SK-N-SH (cell line): ENCODE measurements at regions of chr2 and their contacts with region 1.

Region 1: DNA sequence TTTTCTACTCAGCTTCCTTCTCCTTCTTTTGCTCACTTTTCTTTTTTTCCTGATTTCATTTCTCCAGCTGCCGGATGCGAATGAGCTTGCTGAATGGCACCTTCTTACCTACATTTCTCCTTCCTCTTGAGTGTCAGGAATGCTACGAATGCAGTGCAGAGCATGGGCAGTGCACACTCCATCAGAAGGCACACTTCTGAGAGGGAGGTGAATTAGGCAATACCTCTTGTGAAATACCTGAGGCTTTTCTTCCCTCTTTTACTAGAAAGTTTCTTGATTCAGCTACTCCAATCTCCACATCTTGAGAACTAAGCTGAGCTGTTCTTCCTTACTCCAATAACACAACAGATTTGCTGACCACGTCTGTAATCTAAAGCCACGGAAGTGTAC is 51.1 kb downstream of the PLEKHM3 start:
- DNase-seq: no peak
- H3K4me3 ChIP-seq: no peak overlapping the region
- H3K27ac ChIP-seq: no peak overlapping the region
- H3K4me1 ChIP-seq: peaks cover 0 to 4% of the 10 kb centered on the region in 2 experiments; a peak in 2 of 4 replicates
- H3K27me3 ChIP-seq: no peaks in the 10 kb centered on the region
- CTCF ChIP-seq: no peak
- EP300 ChIP-seq: no peak
- RAD21 ChIP-seq: no peak

Region 2: DNA sequence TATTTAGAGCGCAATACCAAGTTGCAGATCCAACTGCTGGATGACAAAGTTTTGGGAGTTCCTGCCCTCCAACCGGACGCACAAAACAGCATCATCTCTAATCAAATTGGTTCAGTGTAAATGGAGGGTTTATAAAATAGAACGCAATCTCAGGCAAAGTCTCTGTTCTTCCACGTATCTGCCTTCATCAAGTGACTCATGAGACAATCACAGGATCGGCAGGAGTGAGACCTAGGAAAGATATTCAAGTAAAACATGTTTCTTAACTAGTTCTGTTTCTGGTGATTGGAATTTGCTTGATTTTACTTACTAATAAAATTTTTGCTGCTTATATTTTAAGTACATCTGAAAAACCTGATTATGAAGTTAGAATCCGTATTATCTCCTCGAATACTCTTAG is 212.1 kb before region 1 on chr2:
- CTCF ChIA-PET with region 1: interaction called, 36 read pairs
- POLR2A ChIA-PET with region 1: no interaction called
- DNase-seq: no peak
- H3K4me3 ChIP-seq: no peak overlapping the region
- H3K27ac ChIP-seq: no peak overlapping the region; a peak in 1 of 4 replicates
- H3K4me1 ChIP-seq: peaks cover 6 to 10% of the 10 kb centered on the region in 2 experiments; a peak in 2 of 4 replicates
- H3K27me3 ChIP-seq: no peaks in the 10 kb centered on the region
- CTCF ChIP-seq: no peak
- EP300 ChIP-seq: no peak
- RAD21 ChIP-seq: no peak

Region 3: DNA sequence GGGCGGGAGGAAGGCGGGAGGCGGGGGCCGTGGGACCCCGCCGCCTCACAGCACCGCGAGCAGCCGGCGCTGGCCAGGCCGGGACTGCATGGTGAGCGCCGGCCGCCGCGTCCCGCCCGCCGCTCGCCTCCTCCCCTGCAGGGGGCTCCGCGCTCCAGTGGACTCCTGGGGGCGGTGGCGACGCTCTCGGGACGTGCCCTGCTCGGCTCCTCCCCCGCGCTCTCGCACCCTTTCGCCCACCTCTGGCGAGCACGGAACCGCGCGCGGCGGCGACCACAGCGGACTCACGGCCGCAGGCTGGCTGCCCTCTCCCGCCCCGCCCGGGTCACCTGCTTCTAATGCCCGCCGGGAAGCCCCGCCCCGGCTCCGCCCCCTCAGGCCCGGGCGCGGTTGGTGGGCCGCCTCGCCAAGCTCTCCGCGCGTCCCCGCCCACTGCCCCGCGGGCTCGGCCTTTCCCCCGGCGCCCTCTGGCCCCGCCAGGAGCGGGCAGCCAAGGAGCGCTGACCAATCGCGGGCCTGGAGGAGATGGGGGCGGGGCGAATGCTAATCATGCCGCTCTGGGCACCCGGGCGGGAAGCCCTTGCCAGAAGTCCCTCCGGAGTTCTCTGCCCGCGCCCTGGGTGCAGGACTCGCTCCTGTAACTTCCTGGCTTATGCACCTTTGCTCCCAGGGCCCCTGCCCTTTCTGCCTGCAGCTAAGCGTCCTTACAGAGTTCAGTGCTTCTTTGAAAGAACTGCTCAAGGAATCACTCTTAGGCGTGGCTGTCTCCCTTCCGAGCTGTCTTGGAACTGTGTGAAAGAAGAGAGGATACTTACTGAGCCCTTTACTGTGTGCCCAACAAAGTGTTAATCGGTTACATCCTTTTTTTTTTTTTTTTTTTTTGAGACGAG is 204.4 kb before region 1 on chr2 and contains the start of gene FZD5:
- CTCF ChIA-PET with region 1: interaction called, 36 read pairs
- POLR2A ChIA-PET with region 1: no interaction called
- DNase-seq: peak; percentile 98
- H3K4me3 ChIP-seq: peak within 1 kb of the TSS; percentile 79 to 89
- H3K27ac ChIP-seq: peak within 1 kb of the TSS; percentile 11 to 33; a peak in 2 of 4 replicates
- H3K4me1 ChIP-seq: peaks cover 0 to 18% of the 10 kb centered on the region in 2 experiments; a peak in 1 of 4 replicates
- H3K27me3 ChIP-seq: no peaks in the 10 kb centered on the region
- CTCF ChIP-seq: peak; percentile 49
- EP300 ChIP-seq: no peak
- RAD21 ChIP-seq: peak; percentile 42
- polyA plus RNA-seq, gene FZD5: 0.52 and 0.72 TPM in 2 replicates

Region 4: GRCh38 chr2:207847807-207848544 is 126.2 kb before region 1 on chr2:
- CTCF ChIA-PET with region 1: no interaction called
- POLR2A ChIA-PET with region 1: no interaction called
- DNase-seq: no peak
- H3K4me3 ChIP-seq: no peak overlapping the region
- H3K27ac ChIP-seq: no peak overlapping the region
- H3K4me1 ChIP-seq: no peaks in the 10 kb centered on the region
- H3K27me3 ChIP-seq: no peaks in the 10 kb centered on the region
- CTCF ChIP-seq: no peak
- EP300 ChIP-seq: no peak
- RAD21 ChIP-seq: no peak

Region 5: DNA sequence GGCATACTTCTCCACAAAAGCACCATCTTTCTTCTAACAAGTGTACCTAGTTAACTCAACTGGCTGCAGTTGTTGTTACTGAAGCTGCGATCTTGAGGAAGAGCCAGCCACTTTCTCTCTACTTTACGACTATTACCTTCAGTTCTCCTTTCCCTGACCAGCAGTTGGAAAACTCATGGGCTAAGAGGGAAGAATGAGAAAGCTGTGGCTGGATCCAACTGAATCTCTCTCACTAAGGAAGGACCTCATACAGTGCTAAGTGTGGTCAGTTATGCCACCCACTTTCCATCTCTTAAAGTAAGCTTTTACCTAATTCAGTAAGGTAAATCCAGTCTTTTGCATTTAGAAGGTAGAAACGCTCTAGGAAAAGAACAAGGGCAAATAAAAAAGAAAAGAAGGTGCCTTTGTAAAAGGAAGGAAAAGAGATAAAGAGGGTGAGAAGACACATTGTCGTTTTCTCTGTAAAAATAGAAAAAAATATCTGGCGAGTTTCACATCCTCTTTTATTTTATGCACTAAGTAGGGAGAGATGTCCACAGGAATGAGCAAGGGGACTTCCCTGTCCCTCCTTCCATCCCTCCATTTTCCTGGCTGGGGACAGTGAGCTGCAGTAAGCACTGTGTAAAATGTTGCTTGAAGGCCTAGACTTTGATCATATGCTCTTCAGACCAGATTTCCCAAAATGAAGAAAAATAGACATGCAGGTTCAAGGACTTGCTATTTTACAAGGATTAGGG is 22.3 kb before region 1 on chr2:
- CTCF ChIA-PET with region 1: interaction called, 14 read pairs
- POLR2A ChIA-PET with region 1: no interaction called
- DNase-seq: no peak
- H3K4me3 ChIP-seq: no peak overlapping the region
- H3K27ac ChIP-seq: no peak overlapping the region
- H3K4me1 ChIP-seq: peaks cover 0 to 5% of the 10 kb centered on the region in 2 experiments; a peak in 1 of 4 replicates
- H3K27me3 ChIP-seq: no peaks in the 10 kb centered on the region
- CTCF ChIP-seq: no peak
- EP300 ChIP-seq: no peak
- RAD21 ChIP-seq: no peak

Region 6: DNA sequence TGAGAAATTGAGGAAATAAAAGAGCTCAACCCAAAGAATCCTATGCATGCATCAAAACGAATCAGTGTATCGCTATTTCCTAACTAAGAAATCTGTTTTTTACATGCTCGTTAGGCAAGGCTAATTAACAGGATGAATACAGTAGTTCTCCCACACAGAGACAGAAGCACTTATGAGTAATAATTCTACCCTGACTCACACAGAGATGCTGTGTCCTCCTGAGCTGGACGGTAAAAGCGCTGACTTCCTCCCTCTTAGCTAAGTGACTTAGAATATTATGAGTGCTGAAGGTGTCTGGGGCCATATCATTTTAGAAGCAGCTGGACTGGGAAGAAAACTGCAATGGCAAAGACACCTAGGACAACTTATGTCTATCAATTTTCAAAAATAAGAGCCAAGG is 32.6 kb after region 1 on chr2:
- CTCF ChIA-PET with region 1: interaction called, 13 read pairs
- POLR2A ChIA-PET with region 1: no interaction called
- DNase-seq: no peak
- H3K4me3 ChIP-seq: no peak overlapping the region
- H3K27ac ChIP-seq: no peak overlapping the region
- H3K4me1 ChIP-seq: no peaks in the 10 kb centered on the region; a peak in 1 of 4 replicates
- H3K27me3 ChIP-seq: no peaks in the 10 kb centered on the region
- CTCF ChIP-seq: no peak
- EP300 ChIP-seq: no peak
- RAD21 ChIP-seq: no peak